Right ventricle myocardium inferior (tissue), 1 donor: ENCODE measurements at regions of chr19 and their contacts with region 1.

Region 1: DNA sequence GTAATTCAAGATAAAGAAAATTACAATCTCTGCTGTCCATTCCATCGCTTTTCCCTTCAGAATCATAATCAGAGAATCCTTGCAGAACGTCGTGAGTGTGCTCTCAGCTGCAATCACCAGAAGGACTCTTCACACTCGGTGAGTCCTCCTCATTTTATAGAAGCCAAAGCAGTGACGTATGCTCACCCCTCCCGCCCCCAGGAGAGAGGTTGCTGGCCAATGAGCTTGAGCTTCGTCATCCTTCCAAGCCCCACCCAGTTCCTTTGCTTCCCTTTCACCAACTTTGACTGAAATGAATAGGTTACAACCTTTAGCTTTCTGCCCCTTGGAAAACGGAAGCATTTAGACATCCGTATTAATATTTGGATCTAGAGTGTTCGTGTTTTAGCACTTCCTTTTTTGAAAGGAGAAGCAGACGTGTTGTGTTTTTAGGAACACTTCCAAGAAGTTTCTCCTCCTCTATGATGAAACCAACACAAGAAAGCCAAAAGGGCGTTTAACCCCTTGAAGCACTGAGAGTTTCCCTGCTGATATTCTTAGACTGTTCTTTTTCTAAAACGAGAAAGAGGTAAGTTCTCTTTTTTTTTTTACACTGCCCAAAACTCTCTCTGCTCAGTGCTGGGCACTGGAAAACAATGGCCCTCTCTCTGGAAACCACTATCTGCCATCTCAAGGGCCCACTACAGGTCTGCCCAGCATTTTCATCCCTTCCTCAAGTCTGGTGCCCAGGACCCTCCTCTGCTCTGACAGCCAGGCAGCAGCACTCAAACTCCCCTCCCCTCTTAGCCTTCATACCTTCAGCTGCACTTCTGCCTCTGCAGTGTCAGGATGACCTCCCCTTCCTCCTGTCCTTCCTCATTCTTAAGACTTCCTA is 44.3 kb upstream of the CEACAM21 start:
- DNase-seq: peak; percentile 87
- ATAC-seq: peak; percentile 88

Region 2: GRCh38 chr19:41000310-41000737 is 531.4 kb before region 1 on chr19:
- intact Hi-C with region 1: no loop called
- DNase-seq: no peak
- ATAC-seq: no peak

Region 3: GRCh38 chr19:41500443-41500842 is 31.2 kb before region 1 on chr19:
- intact Hi-C with region 1: loop called (anchors 1 kb)
- DNase-seq: no peak
- ATAC-seq: no peak